Breast epithelium (tissue), 4 donors: ENCODE measurements at regions of chr3 and their contacts with region 1.

Region 1: DNA sequence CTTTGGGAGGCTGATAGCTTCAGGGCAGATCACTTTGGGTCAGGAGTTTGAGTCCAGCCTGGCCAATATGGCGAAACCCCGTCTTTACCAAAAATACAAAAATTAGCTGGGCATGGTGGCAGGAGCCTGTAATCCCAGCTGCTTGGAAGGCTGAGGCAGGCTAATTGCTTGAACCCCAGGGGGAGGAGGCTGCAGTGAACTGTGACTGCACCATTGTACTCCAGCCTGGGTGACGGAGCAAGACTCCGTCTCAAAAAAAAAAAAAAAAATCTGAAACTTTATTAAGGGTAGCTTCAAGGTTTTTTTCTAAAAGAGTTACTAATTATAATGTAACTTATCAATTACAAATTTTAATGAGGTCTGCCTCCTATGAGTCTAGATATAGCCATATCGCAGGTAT is 5.1 kb downstream of the NECTIN3 start:
- DNase-seq: no peak
- H3K4me3 ChIP-seq: no peak overlapping the region
- H3K27ac ChIP-seq: no peak overlapping the region
- H3K4me1 ChIP-seq: no peaks in the 10 kb centered on the region
- H3K27me3 ChIP-seq: peaks cover 0 to 4% of the 10 kb centered on the region in 2 donors
- CTCF ChIP-seq: no peak
- POLR2A ChIP-seq: no peak

Region 2: GRCh38 chr3:111303760-111304159 is 227.0 kb after region 1 on chr3:
- intact Hi-C with region 1: loop called (anchors 5 kb)
- DNase-seq: no peak
- H3K4me3 ChIP-seq: no peak overlapping the region
- H3K27ac ChIP-seq: no peak overlapping the region
- H3K4me1 ChIP-seq: no peaks in the 10 kb centered on the region
- H3K27me3 ChIP-seq: no peaks in the 10 kb centered on the region
- CTCF ChIP-seq: no peak
- POLR2A ChIP-seq: no peak